ENCODE measurements at regions of chr6 and their contacts with region 1.

Region 1: GRCh38 chr6:90497411-90497810 is 89.5 kb downstream of the MAP3K7 start:
- DNase-seq: peak; percentile 34 to 61 (median 40)
- ATAC-seq: peak; percentile 87
- H3K4me3 ChIP-seq: no peak overlapping the region
- H3K27ac ChIP-seq: no peak overlapping the region
- H3K4me1 ChIP-seq: peaks cover 0 to 6% of the 10 kb centered on the region in 2 experiments; a peak in 3 of 5 replicates
- H3K27me3 ChIP-seq: no peaks in the 10 kb centered on the region
- CTCF ChIP-seq: peak; percentile 70 to 71 (median 70)
- EP300 ChIP-seq: no peak
- POLR2A ChIP-seq: no peak
- RAD21 ChIP-seq: peak; percentile 62 to 90

Region 2: DNA sequence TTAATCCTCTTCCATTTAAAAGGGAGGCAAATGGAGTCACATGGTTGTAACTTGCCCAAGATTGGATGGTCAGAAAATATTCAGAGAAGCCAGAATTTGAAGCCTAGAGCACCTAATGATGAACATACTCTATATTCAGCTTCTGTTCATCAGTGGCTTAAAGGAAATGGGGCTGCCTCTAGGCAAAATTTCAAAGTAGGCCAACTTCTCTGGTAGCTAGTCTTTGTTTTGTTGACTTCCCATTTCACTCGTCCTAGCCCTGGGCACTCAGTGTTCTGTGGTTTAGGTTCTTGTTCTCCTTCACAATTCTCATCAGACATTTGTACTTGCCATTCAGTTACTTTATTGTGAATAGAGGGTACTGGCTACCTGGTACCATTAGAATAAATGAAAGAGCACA is 76.2 kb after region 1 on chr6:
- CTCF ChIA-PET with region 1: interaction called, 4 read pairs
- POLR2A ChIA-PET with region 1: no interaction called
- in situ Hi-C with region 1: no loop called
- intact Hi-C with region 1: loop called (anchors 2 kb)
- DNase-seq: no peak
- ATAC-seq: no peak
- H3K4me3 ChIP-seq: no peak overlapping the region
- H3K27ac ChIP-seq: no peak overlapping the region
- H3K4me1 ChIP-seq: no peaks in the 10 kb centered on the region
- H3K27me3 ChIP-seq: no peaks in the 10 kb centered on the region
- CTCF ChIP-seq: no peak
- EP300 ChIP-seq: no peak
- POLR2A ChIP-seq: no peak
- RAD21 ChIP-seq: no peak